Left ventricle myocardium superior (tissue), 1 donor: ENCODE measurements at regions of chr1 and their contacts with region 1.

Region 1: DNA sequence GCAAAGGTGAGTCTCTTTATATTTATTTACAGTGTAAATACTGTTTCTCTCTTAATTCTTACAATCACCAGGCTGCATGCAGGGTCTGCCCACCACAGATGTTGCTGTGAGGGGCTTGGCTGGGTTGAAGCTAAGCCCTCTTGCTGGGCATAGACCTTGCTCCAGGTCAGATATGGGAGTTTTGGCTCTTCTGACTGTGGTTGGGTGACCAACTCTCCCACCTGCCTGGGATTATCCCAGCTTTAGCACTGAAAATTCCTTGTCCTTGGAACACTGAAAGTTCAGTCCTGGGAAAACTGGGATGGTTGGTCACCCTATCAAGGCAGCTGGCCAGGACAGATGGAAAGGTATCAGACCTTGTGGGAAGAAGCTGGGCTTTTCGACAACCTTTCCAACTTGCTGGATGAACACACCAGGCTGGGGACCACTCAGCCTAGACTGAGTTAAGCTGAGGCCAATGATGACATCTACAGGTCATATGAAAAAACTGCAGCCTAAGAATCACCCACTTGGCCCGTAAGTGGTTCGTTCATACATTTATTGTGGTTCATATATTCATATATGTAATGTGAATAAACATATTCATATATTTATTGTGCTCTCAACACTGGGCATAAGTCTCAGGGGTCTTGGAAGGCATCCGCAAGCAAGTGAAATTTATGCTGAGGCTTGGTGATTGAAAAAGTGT is 26.6 kb upstream of the HPDL start:
- DNase-seq: no peak
- ATAC-seq: no peak

Region 2: DNA sequence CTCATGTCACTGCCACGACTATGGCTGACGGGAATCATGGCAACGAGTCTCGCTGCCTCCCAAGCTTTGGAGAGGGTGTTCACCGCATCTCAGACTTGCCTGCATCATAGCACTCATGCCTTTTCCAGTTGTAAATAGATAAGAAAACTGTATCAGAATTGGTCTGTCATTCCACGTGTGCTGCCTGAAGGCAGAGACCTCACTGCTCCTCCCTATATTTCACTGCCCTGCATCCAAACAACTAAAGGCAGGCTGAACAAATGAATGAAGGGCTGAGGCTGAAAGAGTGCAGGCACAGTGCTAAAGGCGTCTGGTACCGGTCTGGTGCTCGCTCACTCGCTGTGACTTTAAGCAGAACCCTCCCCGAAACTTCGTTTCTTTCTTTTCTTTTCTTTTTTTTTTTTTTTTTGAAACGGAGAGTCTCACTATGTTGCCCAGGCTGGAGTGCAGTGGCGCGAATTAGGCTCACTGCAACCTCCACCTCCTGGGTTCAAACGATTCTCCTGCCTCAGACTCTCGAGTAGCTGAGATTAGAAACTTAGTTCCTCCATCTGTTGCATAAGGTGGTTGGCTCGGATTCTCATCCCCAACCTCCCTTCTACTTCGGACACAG is 314.3 kb before region 1 on chr1:
- intact Hi-C with region 1: no loop called
- DNase-seq: no peak
- ATAC-seq: peak; percentile 69

Region 3: GRCh38 chr1:45011837-45012638 is 288.1 kb before region 1 on chr1 and contains the start of gene UROD:
- intact Hi-C with region 1: loop called (anchors 2 kb)
- DNase-seq: peak; percentile 93
- ATAC-seq: peak; percentile 94
- total RNA-seq, gene UROD: 84.8 TPM